Body of pancreas (tissue), 4 donors: ENCODE measurements at regions of chr1 and their contacts with region 1.

Region 1: GRCh38 chr1:153790966-153791647 is 15.9 kb downstream of the SLC27A3 start:
- DNase-seq: peak in 1 of 4 donors; percentile 53
- ATAC-seq: no peak
- H3K4me3 ChIP-seq: no peak overlapping the region
- H3K27ac ChIP-seq: peak overlapping the region in 3 of 4 donors; percentile 1 to 71 (median 52)
- H3K4me1 ChIP-seq: peaks cover 15% of the 10 kb centered on the region
- H3K27me3 ChIP-seq: no peaks in the 10 kb centered on the region
- CTCF ChIP-seq: no peak
- POLR2A ChIP-seq: no peak

Region 2: GRCh38 chr1:153984123-153984894 is 193.2 kb after region 1 on chr1:
- intact Hi-C with region 1: loop called (anchors 5 kb)
- DNase-seq: no peak
- ATAC-seq: no peak
- H3K4me3 ChIP-seq: no peak overlapping the region
- H3K27ac ChIP-seq: peak overlapping the region in 2 of 4 donors; percentile 67 to 93
- H3K4me1 ChIP-seq: peaks cover 25% of the 10 kb centered on the region
- H3K27me3 ChIP-seq: no peaks in the 10 kb centered on the region
- CTCF ChIP-seq: no peak
- POLR2A ChIP-seq: no peak

Region 3: DNA sequence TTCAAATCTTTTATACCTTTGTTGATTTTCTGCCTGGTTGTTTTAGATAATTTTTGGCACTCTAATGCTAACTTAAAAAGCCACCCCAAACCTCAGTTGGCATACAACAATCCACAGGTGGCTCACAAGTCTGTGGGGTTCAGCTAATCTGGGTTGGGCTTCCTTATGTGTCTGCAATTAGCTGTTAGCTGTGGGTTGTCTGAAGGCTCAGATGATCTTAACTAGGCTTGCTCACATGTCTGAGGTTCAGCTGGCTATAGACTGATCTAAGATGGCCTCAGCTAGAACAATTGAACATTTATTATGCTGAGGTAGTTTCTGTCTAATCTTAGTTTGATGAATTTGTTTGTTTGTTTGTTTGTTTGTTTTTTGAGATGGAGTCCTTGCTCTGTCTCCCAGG is 861.8 kb after region 1 on chr1:
- intact Hi-C with region 1: no loop called
- DNase-seq: no peak
- ATAC-seq: no peak
- H3K4me3 ChIP-seq: no peak overlapping the region
- H3K27ac ChIP-seq: no peak overlapping the region
- H3K4me1 ChIP-seq: no peaks in the 10 kb centered on the region
- H3K27me3 ChIP-seq: no peaks in the 10 kb centered on the region
- CTCF ChIP-seq: no peak
- POLR2A ChIP-seq: no peak